ENCODE measurements at regions of chr6 and their contacts with region 1.

Region 1: GRCh38 chr6:126339796-126340609 is at the start of gene CENPW:
- DNase-seq: peak; percentile 95 to 97 (median 97)
- ATAC-seq: peak; percentile 87
- H3K4me3 ChIP-seq: peak within 1 kb of the TSS; percentile 87
- H3K27ac ChIP-seq: peak within 1 kb of the TSS; percentile 89
- H3K4me1 ChIP-seq: peaks cover 0 to 8% of the 10 kb centered on the region in 2 experiments; a peak in 2 of 5 replicates
- H3K27me3 ChIP-seq: no peaks in the 10 kb centered on the region
- CTCF ChIP-seq: no peak
- EP300 ChIP-seq: peak; percentile 49; the same call in 1 of the 2 replicates
- POLR2A ChIP-seq: peak; percentile 85
- RAD21 ChIP-seq: no peak
- polyA plus RNA-seq, gene CENPW: 240 to 285 TPM

Region 2: DNA sequence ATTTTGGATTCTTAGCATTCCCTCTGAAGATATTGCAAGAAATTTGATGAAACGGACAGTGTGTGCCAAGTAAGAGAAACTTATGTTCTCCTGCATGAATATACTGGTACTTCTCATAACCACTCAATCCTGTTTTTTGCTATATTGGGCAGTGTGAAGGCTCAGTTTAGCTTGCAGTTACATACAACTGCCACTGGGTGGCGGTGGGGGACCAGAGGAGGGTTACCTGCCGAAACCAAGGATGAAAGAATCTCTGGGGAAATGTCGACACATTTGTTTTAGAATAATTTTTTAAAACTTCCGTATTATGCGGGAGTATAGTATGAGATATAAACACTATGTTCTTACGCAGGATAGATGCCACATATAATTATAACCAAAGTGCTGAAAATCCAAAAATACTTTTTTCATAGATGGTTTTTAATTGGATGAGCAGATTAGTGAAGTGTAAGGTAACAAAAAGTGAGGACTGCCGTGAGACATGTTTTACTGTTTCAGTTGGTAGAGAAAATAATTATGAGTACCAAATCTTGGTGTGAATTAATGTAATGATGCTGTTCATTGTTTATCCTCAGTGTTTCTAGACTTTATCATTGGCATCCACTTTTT is 343.9 kb before region 1 on chr6:
- CTCF ChIA-PET with region 1: no interaction called
- POLR2A ChIA-PET with region 1: no interaction called
- in situ Hi-C with region 1: no loop called
- intact Hi-C with region 1: loop called (anchors 5 kb)
- DNase-seq: peak; percentile 70 to 82 (median 74)
- ATAC-seq: peak; percentile 93
- H3K4me3 ChIP-seq: no peak overlapping the region
- H3K27ac ChIP-seq: no peak overlapping the region
- H3K4me1 ChIP-seq: peaks cover 0 to 4% of the 10 kb centered on the region in 2 experiments; a peak in 1 of 5 replicates
- H3K27me3 ChIP-seq: no peaks in the 10 kb centered on the region
- CTCF ChIP-seq: peak; percentile 85 to 97 (median 93)
- EP300 ChIP-seq: no peak
- POLR2A ChIP-seq: no peak
- RAD21 ChIP-seq: peak; percentile 80 to 88

Region 3: GRCh38 chr6:126422912-126423311 is 82.9 kb after region 1 on chr6:
- CTCF ChIA-PET with region 1: no interaction called
- POLR2A ChIA-PET with region 1: no interaction called
- in situ Hi-C with region 1: no loop called
- intact Hi-C with region 1: no loop called
- DNase-seq: no peak
- ATAC-seq: no peak
- H3K4me3 ChIP-seq: no peak overlapping the region
- H3K27ac ChIP-seq: no peak overlapping the region
- H3K4me1 ChIP-seq: no peaks in the 10 kb centered on the region
- H3K27me3 ChIP-seq: no peaks in the 10 kb centered on the region
- CTCF ChIP-seq: no peak
- EP300 ChIP-seq: no peak
- POLR2A ChIP-seq: no peak
- RAD21 ChIP-seq: peak; percentile 23 to 33; a peak in 2 of 4 replicates

Measured in K562 (cell line).